PC-3 (cell line): ENCODE measurements at regions of chr13 and their contacts with region 1.

Region 1: DNA sequence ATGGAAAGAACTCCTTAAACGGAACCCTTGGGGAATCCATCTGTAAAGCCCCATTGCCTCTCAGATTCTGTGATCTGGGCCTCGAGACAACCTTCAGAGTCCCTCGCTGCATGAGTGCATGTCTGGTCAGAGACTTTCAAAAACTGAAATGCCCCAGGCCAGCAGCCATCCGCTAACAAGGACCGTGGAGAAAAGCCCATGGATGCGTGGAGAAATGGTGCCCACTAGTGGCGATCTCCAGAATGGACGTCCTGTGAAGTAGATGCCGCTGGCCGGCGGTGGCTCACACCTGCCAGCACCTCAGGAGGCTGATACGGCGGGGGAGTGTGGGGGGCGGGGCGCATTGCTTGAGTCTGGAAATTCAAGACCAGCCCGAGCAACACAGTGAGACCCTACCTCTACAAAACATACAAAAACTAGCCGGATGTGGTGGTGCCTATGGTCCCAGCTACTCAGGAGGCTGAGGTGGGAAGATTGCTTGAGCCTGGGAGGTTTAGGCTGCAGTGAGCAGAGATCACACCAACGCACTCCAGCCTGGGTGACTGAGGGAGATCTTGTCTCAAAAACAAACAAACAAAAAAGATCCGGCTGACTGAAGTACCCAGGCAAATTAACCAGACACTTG is 7.9 kb upstream of the CDC16 start:
- DNase-seq: peak; percentile 87
- ATAC-seq: peak; percentile 97
- H3K4me3 ChIP-seq: no peak overlapping the region
- H3K27ac ChIP-seq: no peak overlapping the region
- H3K4me1 ChIP-seq: no peaks in the 10 kb centered on the region
- H3K27me3 ChIP-seq: no peaks in the 10 kb centered on the region
- CTCF ChIP-seq: peak; percentile 80

Region 2: GRCh38 chr13:114015608-114016295 is 211.1 kb before region 1 on chr13:
- CTCF ChIA-PET with region 1: no interaction called
- POLR2A ChIA-PET with region 1: no interaction called
- intact Hi-C with region 1: loop called (anchors 1 kb)
- DNase-seq: peak; percentile 65
- ATAC-seq: peak; percentile 93
- H3K4me3 ChIP-seq: no peak overlapping the region
- H3K27ac ChIP-seq: peak overlapping the region; percentile 52
- H3K4me1 ChIP-seq: peaks cover 6% of the 10 kb centered on the region; the same call in 1 of the 2 replicates
- H3K27me3 ChIP-seq: no peaks in the 10 kb centered on the region
- CTCF ChIP-seq: no peak

Region 3: DNA sequence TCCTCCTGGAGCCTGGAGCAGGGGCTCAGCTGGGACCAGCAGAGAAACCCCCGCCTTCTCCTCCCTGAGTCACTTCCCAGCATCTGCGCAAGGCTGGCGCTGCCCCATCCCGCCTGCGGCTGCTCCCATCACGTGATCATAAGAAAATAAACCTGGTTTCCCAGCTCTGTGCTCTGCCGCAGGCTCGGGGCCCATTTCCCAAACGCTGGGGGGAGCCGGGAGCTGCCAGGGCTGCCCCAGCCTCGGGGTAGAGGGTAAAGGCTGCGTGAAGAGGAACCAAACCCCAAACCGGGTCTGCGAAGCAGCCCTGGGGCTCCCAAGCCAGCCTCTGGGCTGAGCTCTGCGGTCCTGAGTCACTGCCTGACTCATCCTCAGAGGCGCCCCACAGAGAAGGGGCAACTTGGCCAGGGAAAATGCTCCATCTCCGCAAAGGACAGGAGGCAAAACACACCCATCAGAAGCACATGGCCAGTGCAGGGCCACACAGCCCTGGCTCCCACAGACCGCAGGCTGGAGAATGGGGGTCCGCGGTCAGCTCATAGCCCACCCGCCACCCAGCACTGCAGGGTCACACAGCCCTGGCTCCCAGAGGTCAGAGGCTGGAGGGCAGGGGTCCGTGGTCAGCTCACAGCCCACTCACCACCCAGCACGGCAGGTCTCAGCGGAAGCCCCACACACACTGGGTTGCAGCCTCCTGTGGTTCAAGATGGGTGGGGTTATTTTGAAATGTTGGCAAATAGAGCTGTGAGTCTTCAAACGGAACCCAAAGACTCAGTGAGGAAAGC is 161.5 kb before region 1 on chr13:
- CTCF ChIA-PET with region 1: no interaction called
- POLR2A ChIA-PET with region 1: no interaction called
- intact Hi-C with region 1: loop called (anchors 5 kb)
- DNase-seq: peak; percentile 95
- ATAC-seq: peak; percentile 88
- H3K4me3 ChIP-seq: peak overlapping the region; percentile 64
- H3K27ac ChIP-seq: peak overlapping the region; percentile 100
- H3K4me1 ChIP-seq: peaks cover 43% of the 10 kb centered on the region
- H3K27me3 ChIP-seq: no peaks in the 10 kb centered on the region
- CTCF ChIP-seq: no peak

Region 4: DNA sequence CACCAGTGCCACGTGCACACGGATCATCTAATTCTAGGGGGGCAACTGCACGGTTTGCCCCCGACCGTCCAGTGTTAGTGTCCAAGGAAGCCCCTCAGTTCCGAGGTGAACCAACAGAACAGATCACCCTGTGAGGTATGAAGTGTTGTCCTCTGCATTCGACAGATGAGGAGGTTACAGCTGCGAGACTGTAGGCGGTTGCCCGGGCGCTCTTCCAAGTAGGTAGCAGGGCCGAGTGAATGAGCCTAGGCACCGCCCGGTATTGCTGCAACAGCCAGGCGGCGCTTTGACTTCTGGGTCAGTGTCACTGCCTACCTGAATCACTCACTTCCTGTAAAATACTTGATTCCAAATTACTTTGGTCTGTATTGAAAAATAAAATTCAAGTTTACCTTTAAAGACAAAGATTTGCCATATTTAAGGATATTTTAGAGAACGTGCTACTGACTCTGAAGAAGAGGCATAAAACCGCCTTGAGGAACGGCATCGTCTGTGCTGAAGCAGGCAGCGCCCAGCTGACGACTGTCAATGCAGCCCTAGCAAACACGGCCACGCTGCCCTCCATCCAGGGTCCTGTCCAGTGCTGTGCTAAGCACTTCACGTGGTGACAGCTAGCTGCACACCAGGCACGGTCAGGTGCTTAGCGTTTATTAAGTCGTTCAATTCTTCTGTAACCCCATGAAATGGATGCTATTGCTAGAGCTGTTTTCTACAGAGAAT is 75.1 kb before region 1 on chr13:
- CTCF ChIA-PET with region 1: no interaction called
- POLR2A ChIA-PET with region 1: no interaction called
- intact Hi-C with region 1: loop called (anchors 5 kb)
- DNase-seq: peak; percentile 84
- ATAC-seq: peak; percentile 91
- H3K4me3 ChIP-seq: no peak overlapping the region
- H3K27ac ChIP-seq: no peak overlapping the region
- H3K4me1 ChIP-seq: peaks cover 15% of the 10 kb centered on the region
- H3K27me3 ChIP-seq: no peaks in the 10 kb centered on the region
- CTCF ChIP-seq: no peak; the same call in 1 of the 2 replicates

Region 5: DNA sequence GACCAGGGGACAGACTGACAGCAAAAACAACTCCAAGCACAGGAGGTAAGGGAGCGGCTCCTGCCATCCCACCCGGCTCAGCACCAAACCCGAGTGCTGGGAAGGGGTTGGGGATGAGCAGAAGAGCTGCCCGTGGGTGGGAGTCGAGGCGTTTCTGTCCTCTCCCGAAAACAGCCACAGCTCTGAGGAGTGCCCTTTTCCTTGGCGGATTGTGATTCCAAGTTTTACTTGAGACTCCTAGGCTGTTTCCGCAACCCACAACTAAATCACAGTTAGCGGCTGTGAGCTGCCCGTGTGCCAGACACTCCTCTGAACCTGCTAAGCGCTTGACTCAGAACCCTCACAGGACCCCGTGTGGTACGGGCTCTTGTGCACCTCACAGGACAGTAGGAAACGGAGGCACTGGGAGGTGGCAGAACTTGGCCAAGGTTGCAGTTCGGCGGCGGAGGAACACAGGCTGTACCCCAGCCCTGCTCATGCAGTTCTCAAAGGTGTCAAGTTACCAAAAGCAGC is 26.4 kb before region 1 on chr13:
- CTCF ChIA-PET with region 1: no interaction called
- POLR2A ChIA-PET with region 1: no interaction called
- intact Hi-C with region 1: no loop called
- DNase-seq: no peak
- ATAC-seq: no peak
- H3K4me3 ChIP-seq: no peak overlapping the region
- H3K27ac ChIP-seq: no peak overlapping the region
- H3K4me1 ChIP-seq: no peaks in the 10 kb centered on the region
- H3K27me3 ChIP-seq: no peaks in the 10 kb centered on the region
- CTCF ChIP-seq: no peak

Region 6: DNA sequence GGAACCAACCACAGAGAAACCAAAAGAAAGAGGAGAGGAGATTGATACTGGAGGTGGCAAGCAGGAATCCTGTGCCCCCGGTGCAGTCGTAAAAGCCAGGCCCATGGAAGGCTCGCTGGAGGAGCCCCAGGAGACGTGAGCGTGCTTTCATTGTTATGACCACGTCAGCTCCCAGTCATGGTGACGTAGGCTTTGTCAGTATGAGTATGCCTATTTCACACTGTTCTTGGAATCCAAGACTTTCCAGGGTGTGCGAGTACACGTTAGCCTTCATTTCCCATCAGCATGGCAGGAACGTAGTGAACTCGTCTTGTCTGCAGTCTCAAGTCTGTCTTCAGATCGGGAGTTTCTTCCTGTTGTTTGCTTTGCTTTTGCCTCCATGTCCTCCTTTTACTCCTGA is 72.1 kb after region 1 on chr13:
- CTCF ChIA-PET with region 1: no interaction called
- POLR2A ChIA-PET with region 1: no interaction called
- intact Hi-C with region 1: no loop called
- DNase-seq: no peak
- ATAC-seq: no peak
- H3K4me3 ChIP-seq: no peak overlapping the region
- H3K27ac ChIP-seq: no peak overlapping the region
- H3K4me1 ChIP-seq: no peaks in the 10 kb centered on the region
- H3K27me3 ChIP-seq: no peaks in the 10 kb centered on the region
- CTCF ChIP-seq: no peak